Esophagus squamous epithelium (tissue), 5 donors: ENCODE measurements at regions of chr7 and their contacts with region 1.

Region 1: DNA sequence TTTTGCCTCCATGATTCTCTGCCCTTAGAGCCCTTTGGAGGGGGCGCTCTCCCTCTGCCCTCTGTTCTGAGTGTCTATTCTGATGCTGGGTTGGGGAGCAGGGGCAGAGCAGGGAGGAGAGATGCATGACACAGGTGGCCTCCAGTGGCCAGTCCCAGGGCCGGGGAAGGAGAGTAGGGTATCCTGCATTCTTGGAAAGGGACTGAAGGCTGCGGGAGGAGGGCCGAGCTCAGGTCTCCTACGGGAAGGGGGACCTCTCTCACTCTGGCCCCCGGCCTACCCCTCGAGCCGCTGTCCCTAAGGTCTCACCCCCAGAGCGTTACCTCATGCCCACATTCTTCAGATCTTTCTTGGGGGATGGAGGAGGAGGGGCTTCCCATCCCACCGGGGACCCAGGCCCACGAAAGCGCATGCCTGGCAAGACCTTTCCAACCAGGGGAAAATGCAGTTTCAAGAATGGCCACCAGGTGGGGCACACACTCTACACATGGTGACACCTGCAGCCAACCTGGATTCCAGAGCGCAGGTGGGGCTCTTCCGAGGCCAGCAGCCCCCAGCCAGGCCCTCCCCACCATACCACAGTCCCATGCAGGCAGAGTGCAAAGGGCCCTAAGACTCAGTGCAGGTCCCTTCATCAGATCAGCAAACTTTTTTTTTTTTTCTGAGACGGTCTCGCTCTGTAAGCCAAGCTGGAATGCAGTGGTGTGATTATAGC is 86.4 kb downstream of the MYL10 start:
- DNase-seq: no peak
- H3K4me3 ChIP-seq: no peak overlapping the region
- H3K27ac ChIP-seq: no peak overlapping the region
- H3K4me1 ChIP-seq: peaks cover 0 to 10% (median 0%) of the 10 kb centered on the region in 3 donors
- H3K27me3 ChIP-seq: peaks cover 0 to 10% (median 0%) of the 10 kb centered on the region in 4 donors
- CTCF ChIP-seq: peak; percentile 86 to 96 (median 90)
- POLR2A ChIP-seq: no peak

Region 2: DNA sequence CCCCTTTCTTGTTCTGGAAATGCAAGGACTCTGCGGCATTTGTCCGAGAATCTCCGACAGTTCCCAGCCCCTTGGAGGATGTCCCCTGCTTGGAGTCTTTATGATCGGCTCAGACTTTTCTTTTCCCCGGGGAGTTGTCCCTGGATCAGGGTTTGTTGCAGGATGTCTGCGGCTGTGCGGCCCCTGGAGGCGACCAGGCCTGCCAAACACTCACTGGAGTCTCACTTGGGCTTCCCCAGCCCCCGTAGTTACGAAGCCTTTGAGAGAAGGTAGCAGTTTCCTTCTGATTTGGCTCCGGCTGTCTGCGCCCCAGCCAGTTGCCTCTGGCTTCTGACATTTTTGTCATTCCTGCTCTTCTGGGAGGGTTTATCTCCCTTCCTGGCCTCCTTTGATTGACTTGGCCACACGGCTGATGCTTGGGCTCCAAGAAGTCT is 163.9 kb before region 1 on chr7:
- intact Hi-C with region 1: loop called (anchors 10 kb)
- DNase-seq: no peak
- H3K4me3 ChIP-seq: no peak overlapping the region
- H3K27ac ChIP-seq: no peak overlapping the region
- H3K4me1 ChIP-seq: peaks cover 0 to 11% (median 0%) of the 10 kb centered on the region in 3 donors
- H3K27me3 ChIP-seq: peaks cover 0 to 33% (median 0%) of the 10 kb centered on the region in 4 donors
- CTCF ChIP-seq: no peak
- POLR2A ChIP-seq: no peak

Region 3: DNA sequence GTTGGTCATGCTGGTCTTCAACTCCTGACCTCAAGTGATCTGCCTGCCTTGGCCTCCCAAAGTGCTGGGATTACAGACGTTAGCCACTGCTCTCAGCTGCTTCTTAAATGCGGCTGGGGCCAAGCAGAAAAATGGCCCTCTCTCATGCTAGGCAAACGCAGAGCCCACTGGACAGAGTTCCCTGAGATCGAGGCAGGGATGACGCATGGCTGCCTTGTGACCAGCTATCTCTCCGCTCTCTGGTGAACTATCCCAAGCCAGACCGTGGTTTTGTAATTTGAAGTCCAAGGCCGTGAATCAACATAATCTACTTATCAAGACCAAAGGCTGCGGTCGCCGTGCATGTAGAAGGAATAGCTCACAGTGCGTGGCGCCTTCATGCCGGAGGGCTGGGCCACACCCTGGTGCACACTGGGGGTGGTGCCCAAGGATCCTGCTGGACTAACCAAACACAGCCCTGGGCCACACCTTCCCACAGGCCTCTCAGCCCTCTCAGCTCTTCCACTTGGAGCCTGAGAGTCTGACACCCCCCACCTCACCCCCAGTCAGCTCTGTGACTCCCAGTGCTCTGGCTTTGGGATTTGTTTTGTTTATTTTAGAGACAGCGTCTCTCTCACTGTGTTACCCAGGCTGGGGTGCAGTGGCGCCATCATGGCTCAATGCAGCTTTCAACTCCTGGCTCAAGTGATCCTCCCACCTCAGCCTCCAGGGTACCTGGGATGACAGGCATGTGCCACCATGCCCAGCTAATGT is 186.7 kb after region 1 on chr7:
- intact Hi-C with region 1: no loop called
- DNase-seq: no peak
- H3K4me3 ChIP-seq: no peak overlapping the region
- H3K27ac ChIP-seq: no peak overlapping the region
- H3K4me1 ChIP-seq: peaks cover 0 to 12% (median 6%) of the 10 kb centered on the region in 3 donors
- H3K27me3 ChIP-seq: no peaks in the 10 kb centered on the region
- CTCF ChIP-seq: no peak
- POLR2A ChIP-seq: no peak

Region 4: GRCh38 chr7:102272075-102272917 is 729.6 kb after region 1 on chr7:
- intact Hi-C with region 1: loop called (anchors 5 kb)
- DNase-seq: no peak
- H3K4me3 ChIP-seq: no peak overlapping the region
- H3K27ac ChIP-seq: no peak overlapping the region
- H3K4me1 ChIP-seq: peaks cover 0 to 6% (median 3%) of the 10 kb centered on the region in 3 donors
- H3K27me3 ChIP-seq: no peaks in the 10 kb centered on the region
- CTCF ChIP-seq: peak; percentile 76 to 94 (median 89)
- POLR2A ChIP-seq: no peak